K562 (cell line): ENCODE measurements at regions of chr17 and their contacts with region 1.

Region 1: DNA sequence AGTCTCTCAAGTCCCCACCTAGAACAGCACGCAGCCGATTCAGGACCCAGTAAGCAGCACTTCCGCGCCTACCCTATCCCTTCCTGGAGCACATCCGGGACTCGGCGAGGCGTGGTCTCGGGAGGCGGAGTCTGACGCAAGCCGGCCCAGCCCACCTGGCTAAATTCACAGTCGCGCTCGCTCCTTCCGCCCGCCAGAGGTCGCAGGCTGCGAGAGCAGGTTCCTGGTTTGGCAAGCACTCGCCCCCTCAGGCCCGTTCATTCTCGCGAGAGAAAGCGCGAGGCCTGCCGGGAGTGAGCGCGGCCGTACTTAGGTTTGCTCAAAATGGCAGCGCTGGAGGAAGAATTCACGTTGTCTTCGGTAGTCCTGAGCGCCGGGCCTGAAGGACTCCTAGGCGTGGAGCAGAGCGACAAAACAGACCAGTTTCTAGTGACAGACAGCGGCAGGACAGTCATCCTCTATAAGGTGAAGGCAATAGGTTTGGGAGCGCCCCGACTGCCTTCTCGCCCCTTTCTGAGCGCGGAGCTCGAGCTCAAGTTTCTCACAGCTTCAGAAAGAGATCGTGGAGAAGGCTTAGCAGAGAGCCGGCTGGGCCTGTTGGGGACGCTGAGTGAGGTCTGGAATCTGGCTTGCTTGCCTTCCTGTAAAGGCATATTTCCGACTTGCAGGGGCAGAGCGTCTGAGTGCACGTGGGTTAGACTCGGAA is at the start of gene NOL11:
- DNase-seq: peak; percentile 96 to 99 (median 97)
- ATAC-seq: peak; percentile 98
- H3K4me3 ChIP-seq: peak within 1 kb of the TSS; percentile 75
- H3K27ac ChIP-seq: peak within 1 kb of the TSS; percentile 90
- H3K4me1 ChIP-seq: 0 out of 5 replicates have a peak, but pooled peaks cover 0 to 5% of the 10 kb centered on the region in 2 experiments
- H3K27me3 ChIP-seq: no peaks in the 10 kb centered on the region
- CTCF ChIP-seq: peak; percentile 91 to 97 (median 95)
- EP300 ChIP-seq: peak; percentile 60; the same call in 1 of the 2 replicates
- POLR2A ChIP-seq: peak; percentile 97
- RAD21 ChIP-seq: peak; percentile 69 to 83
- polyA plus RNA-seq, gene NOL11: 130 to 175 TPM

Region 2: GRCh38 chr17:67700037-67700724 is 17.6 kb before region 1 on chr17:
- CTCF ChIA-PET with region 1: no interaction called
- POLR2A ChIA-PET with region 1: interaction called, 15 read pairs
- in situ Hi-C with region 1: no loop called
- intact Hi-C with region 1: no loop called
- DNase-seq: no peak
- ATAC-seq: no peak
- H3K4me3 ChIP-seq: no peak overlapping the region
- H3K27ac ChIP-seq: no peak overlapping the region
- H3K4me1 ChIP-seq: no peaks in the 10 kb centered on the region
- H3K27me3 ChIP-seq: peaks cover 22 to 23% of the 10 kb centered on the region in 2 experiments
- CTCF ChIP-seq: no peak
- EP300 ChIP-seq: no peak
- POLR2A ChIP-seq: no peak
- RAD21 ChIP-seq: no peak

Region 3: GRCh38 chr17:67779098-67779672 is 61.4 kb after region 1 on chr17:
- CTCF ChIA-PET with region 1: no interaction called
- POLR2A ChIA-PET with region 1: no interaction called
- in situ Hi-C with region 1: no loop called
- intact Hi-C with region 1: loop called (anchors 1 kb)
- DNase-seq: peak; percentile 67 to 78 (median 73)
- ATAC-seq: peak; percentile 90
- H3K4me3 ChIP-seq: no peak overlapping the region
- H3K27ac ChIP-seq: peak overlapping the region; percentile 17; the same call in 2 of the 3 replicates
- H3K4me1 ChIP-seq: peaks cover 15 to 18% of the 10 kb centered on the region in 2 experiments
- H3K27me3 ChIP-seq: no peaks in the 10 kb centered on the region
- CTCF ChIP-seq: peak; percentile 80 to 88 (median 80)
- EP300 ChIP-seq: no peak
- POLR2A ChIP-seq: no peak
- RAD21 ChIP-seq: peak; percentile 43 to 66